ENCODE measurements at regions of chr6 and their contacts with region 1.

Region 1: DNA sequence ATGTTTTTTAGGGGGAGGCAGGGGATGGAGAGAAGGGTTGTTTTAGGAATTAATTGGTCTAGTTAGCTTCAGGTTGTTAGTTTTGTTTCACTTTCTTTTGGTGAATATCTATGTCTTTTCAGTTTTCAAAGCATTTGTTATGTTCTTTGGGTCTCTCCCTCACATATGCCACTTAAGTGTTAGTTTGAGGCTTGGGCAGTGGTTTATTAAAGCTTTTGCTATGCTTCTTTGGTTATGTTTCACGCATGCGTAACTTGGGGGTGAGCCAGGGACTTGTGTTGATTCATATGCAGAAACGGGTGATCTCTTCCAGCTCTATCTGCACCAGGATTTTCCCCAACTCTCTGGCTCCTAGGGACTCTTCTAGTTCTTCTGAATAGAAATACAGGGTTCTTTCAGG is 11.4 kb upstream of the MMS22L start:
- DNase-seq: no peak
- ATAC-seq: no peak
- H3K4me3 ChIP-seq: no peak overlapping the region
- H3K27ac ChIP-seq: no peak overlapping the region
- H3K4me1 ChIP-seq: no peaks in the 10 kb centered on the region
- H3K27me3 ChIP-seq: peaks cover 0 to 6% (median 0%) of the 10 kb centered on the region in 9 donors
- CTCF ChIP-seq: no peak
- POLR2A ChIP-seq: no peak

Region 2: DNA sequence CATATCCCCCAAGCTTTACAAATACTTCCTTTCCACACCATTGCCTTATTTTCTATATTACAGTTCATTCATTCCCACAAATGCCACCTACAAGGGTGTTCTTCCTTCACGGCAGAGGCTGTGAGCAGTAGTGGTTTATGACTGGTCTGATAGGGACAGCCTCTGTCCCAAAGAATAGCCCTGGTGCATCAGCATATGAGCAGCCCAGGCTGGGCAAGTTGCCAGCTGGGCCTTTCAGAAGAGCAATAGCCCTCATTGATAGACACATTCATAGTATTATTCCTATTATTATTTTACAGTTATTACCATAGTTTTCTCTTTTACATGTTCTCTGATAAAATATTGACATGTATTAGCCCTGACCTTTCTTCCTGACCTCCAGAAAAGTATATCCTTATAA is 161.4 kb before region 1 on chr6:
- intact Hi-C with region 1: no loop called
- DNase-seq: peak in 1 of 5 donors; percentile 53
- ATAC-seq: no peak
- H3K4me3 ChIP-seq: no peak overlapping the region
- H3K27ac ChIP-seq: no peak overlapping the region
- H3K4me1 ChIP-seq: no peaks in the 10 kb centered on the region
- H3K27me3 ChIP-seq: no peaks in the 10 kb centered on the region
- CTCF ChIP-seq: no peak
- POLR2A ChIP-seq: no peak

Region 3: DNA sequence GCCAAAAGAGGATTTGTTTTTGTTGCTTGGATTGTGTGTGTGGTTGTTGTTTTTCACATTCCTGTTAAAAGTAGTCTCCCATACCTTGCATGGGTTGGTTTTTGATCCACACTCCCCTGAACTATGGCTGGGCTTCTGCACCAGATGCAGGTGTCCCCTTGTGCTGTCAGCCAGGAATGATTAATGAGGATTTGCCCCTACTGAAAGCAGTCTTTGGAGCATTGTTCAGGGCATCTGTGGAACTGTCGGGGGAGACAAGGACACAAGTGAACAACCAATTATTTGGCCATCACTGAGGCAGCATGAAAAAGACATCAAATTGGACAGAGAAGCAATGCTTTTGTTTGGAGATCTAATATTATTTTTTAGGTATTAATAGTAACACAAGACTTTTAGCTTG is 361.8 kb after region 1 on chr6:
- intact Hi-C with region 1: loop called in 1 of 10 experiments (anchors 5 kb)
- DNase-seq: no peak
- ATAC-seq: no peak
- H3K4me3 ChIP-seq: no peak overlapping the region
- H3K27ac ChIP-seq: no peak overlapping the region
- H3K4me1 ChIP-seq: no peaks in the 10 kb centered on the region
- H3K27me3 ChIP-seq: no peaks in the 10 kb centered on the region
- CTCF ChIP-seq: no peak
- POLR2A ChIP-seq: no peak